ENCODE measurements at regions of chr2 and their contacts with region 1.

Region 1: GRCh38 chr2:241009601-241010530 is 11.4 kb downstream of the SNED1 start:
- DNase-seq: peak; percentile 72
- ATAC-seq: peak; percentile 77
- H3K4me3 Mint-ChIP-seq: peak overlapping the region; percentile 48
- H3K27ac Mint-ChIP-seq: peak overlapping the region; percentile 79
- H3K4me1 Mint-ChIP-seq: peaks cover 31% of the 10 kb centered on the region
- H3K27me3 Mint-ChIP-seq: no peaks in the 10 kb centered on the region
- CTCF ChIP-seq: no peak

Region 2: DNA sequence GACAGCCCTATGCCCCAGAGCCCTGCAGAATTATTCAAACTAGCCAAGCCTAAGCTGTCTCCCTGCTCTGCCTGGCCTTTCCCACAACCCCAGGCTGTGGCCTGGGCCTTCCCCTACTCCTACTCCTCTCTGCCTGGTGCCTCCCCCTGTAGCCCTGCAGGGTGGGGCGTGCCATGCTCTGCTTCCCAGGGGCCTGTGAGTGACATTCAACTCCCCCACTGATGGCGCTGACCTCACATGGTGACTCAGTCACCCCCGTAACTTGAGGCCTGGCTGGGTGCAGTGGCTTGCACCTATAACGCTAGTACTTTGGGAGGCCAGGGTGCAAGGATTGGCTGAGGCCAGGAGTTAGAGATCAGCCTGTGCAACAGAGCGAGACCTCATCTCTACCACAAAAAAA is 250.4 kb before region 1 on chr2:
- CTCF ChIA-PET with region 1: no interaction called
- POLR2A ChIA-PET with region 1: no interaction called
- intact Hi-C with region 1: no loop called
- DNase-seq: peak; percentile 88
- ATAC-seq: peak; percentile 97
- H3K4me3 Mint-ChIP-seq: no peak overlapping the region
- H3K27ac Mint-ChIP-seq: no peak overlapping the region
- H3K4me1 Mint-ChIP-seq: peaks cover 11% of the 10 kb centered on the region
- H3K27me3 Mint-ChIP-seq: no peaks in the 10 kb centered on the region
- CTCF ChIP-seq: no peak

Region 3: DNA sequence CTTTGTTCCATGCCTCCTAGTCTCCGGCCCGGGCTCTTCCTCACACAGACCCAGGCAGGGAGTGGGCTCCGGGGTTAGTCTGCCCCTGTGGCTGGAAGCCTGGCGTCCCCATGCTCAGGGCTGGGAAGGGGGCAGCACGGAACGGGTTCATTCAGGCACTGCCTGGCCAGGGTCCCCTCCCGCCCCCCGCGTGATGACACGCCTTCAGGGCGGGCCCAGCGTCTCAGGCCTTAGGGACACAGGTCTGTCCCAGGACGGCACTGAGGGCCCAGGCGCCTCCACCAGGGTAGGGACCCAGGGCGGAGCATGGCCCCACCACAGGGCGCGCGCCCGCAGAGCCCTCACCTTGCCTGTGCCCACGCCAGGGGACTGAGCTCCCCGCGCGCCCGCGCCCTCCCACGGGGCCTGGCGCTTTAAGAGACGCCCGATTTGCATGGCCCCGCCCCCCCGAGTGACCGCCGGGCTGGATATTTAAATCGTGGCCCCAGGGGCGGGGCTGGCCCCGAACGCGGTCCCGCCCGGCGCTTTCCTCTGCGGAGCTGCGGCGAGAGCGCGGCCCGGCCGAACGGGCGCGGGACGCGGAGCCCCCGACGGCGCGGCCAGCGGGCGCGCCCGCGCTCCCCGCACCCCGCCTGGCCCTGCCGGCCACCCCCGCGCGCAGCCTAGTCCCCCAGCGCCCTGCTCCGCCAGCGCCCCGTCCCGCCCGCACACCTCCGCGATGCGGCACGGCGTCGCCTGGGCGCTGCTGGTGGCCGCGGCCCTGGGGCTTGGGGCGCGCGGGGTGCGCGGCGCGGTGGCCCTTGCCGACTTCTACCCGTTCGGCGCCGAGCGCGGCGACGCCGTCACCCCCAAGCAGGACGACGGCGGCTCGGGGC is 11.5 kb before region 1 on chr2 and contains the start of gene SNED1:
- CTCF ChIA-PET with region 1: no interaction called
- POLR2A ChIA-PET with region 1: interaction called, 12 read pairs
- intact Hi-C with region 1: no loop called
- DNase-seq: peak; percentile 70
- ATAC-seq: peak; percentile 75
- H3K4me3 Mint-ChIP-seq: peak within 1 kb of the TSS; percentile 46
- H3K27ac Mint-ChIP-seq: no peak within 1 kb of the TSS
- H3K4me1 Mint-ChIP-seq: peaks cover 6% of the 10 kb centered on the region
- H3K27me3 Mint-ChIP-seq: peaks cover 15% of the 10 kb centered on the region
- CTCF ChIP-seq: no peak
- total RNA-seq, gene SNED1: 1.4 to 1.8 TPM

Measured in activated CD8-positive, alpha-beta T cell treated with anti-CD3 and anti-CD28 coated beads for 36 hours (primary cell).